ENCODE measurements at regions of chr20 and their contacts with region 1.

Region 1: DNA sequence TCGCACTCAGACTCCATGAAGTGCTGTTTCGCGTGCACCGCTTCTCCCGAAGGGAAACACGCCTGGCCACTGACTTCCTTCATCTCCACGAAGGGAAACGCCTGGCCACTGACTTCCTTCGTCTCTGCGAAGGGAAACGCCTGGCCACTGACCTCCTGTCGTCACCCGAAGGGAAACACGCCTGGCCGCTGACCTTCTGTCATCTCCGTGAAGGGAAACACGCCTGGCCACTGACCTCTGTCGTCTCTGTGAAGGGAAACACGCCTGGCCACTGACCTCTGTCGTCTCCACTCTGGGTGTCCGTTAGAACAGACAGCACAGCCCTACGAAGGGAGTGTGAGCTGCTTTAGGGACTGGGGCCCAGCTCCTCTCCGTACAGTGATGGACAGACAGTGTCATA is 17.1 kb upstream of the ADRM1 start:
- DNase-seq: peak; percentile 49 to 54
- ATAC-seq: peak; percentile 25 to 85 (median 40)
- H3K4me3 ChIP-seq: no peak overlapping the region
- H3K27ac ChIP-seq: peak overlapping the region in 9 of 10 donors; percentile 65 to 90 (median 73)
- H3K4me1 ChIP-seq: peaks cover 14 to 56% (median 30%) of the 10 kb centered on the region in 9 donors
- H3K27me3 ChIP-seq: no peaks in the 10 kb centered on the region
- CTCF ChIP-seq: no peak

Region 2: GRCh38 chr20:62252342-62252966 is 33.3 kb before region 1 on chr20:
- intact Hi-C with region 1: loop called in 1 of 10 experiments (anchors 5 kb)
- DNase-seq: no peak
- ATAC-seq: no peak
- H3K4me3 ChIP-seq: no peak overlapping the region
- H3K27ac ChIP-seq: no peak overlapping the region
- H3K4me1 ChIP-seq: peaks cover 4 to 46% (median 11%) of the 10 kb centered on the region in 9 donors
- H3K27me3 ChIP-seq: no peaks in the 10 kb centered on the region
- CTCF ChIP-seq: no peak

Region 3: DNA sequence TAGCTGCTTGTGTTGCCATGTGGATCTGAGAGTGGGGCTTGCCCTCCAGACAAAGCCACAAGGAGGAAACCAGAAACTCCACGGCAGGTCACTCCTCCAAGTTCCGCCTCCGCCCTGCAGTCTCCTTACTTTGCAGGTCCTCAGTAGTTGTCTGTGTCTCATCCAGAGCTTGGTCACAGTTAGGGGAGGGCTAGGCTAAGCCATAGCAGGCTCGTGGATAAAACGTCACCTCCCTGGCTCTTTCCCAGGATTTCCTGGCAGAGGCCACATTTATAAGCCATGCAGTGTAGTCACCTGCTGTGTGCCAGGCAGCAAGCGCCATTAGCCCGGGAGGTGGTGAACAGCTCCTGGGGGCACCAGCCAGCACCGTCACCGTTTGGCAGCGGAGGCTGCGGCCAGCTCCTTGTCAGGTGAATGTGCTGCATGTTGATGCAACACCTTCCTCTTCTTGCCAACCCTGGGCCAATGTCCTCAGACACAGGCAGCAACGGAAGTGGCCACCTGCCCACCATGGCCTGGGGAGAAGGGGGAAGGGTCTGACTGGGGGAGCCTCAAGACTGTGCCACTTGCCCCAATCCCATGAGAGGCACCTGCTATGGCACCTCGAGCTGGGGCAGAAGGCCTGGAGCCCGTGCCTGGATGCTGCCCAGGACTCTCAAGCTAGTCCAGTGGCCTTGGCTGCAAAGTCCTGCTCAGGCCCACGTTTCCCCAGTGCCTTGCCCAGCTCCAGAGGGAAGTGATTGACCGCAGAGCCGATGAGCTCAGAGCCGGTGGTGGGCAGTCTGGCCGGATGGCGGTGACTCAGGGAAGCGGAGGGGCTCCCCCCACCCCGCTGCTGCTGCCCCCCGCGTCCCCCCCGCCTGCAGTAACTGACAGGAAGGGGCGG is 317.5 kb after region 1 on chr20:
- intact Hi-C with region 1: no loop called
- DNase-seq: peak; percentile 54 to 61
- ATAC-seq: peak; percentile 67 to 93 (median 76)
- H3K4me3 ChIP-seq: peak overlapping the region in 3 of 10 donors; percentile 2 to 41 (median 15)
- H3K27ac ChIP-seq: peak overlapping the region in 9 of 10 donors; percentile 9 to 86 (median 32)
- H3K4me1 ChIP-seq: peaks cover 7 to 63% (median 28%) of the 10 kb centered on the region in 9 donors
- H3K27me3 ChIP-seq: peaks cover 0 to 20% (median 3%) of the 10 kb centered on the region in 7 donors
- CTCF ChIP-seq: no peak